Posterior cingulate gyrus (tissue), 11 donors: ENCODE measurements at regions of chr1 and their contacts with region 1.

Region 1: GRCh38 chr1:66339944-66340343 is 194.0 kb upstream of the SGIP1 start:
- DNase-seq: no peak

Region 2: GRCh38 chr1:66253330-66253921 is 86.5 kb before region 1 on chr1:
- intact Hi-C with region 1: no loop called
- DNase-seq: no peak

Region 3: DNA sequence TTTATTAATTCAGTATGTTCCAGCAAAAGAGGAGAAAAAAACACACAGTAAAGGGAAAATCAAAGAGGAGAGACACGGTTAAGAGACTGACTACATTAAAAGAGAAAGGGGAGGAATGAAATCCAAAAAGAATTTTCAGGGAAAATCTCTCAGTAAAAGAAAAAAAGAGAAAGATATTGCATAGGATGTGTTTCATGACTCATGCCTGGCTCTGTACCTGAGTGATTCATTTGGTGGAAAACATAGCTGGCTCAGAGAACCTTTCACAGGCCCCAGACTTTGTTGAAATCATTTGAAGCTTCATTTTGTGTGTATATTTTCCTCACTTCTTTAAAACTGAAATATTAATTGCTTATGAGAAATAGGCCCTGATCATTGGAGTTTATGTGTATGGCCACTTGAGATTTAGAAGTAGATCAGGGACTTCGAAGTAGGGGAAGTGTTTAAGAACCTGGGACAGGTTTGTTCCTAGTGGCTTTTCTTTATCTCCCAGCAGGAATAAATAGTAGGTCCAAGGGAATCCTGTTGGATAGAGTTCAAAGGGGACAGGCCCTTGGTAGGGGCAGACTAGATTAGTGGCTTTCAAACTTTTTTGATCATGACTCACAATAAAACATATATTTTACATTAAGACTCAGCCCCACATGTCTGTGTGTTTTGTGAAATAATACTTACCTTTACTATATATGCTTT is 45.1 kb before region 1 on chr1:
- intact Hi-C with region 1: loop called (anchors 10 kb)
- DNase-seq: no peak

Region 4: DNA sequence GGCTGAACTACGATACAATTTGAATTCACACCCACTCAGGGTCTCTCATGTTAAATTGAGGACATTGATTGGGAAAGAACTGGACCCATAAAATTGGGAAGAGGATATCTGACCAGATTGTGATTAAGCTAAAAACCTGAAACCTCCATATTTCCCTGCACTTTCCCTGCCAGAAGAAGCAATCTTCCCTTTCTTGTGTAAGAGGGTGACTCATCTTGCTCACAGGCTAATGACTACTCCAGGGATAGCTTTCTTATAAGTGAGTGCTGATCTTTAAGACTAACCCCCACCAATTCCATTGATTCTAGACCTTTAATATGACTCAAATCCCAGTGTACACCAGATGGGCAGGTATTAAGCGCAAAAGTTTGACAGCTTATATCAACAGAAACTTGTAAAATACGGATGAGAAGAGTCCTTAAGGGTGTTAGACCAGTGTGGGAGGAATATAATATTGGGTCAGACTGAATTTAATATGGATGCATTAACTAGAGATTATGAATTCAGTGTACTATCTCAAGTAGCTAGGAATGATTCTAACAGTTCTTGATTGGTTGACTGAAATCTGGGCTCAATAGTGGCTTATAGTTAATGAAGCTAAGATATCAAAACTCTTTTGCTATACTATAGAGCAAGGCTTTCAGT is 181.9 kb after region 1 on chr1:
- intact Hi-C with region 1: no loop called
- DNase-seq: no peak